Mammary epithelial cell (primary cell): ENCODE measurements at regions of chr9 and their contacts with region 1.

Region 1: DNA sequence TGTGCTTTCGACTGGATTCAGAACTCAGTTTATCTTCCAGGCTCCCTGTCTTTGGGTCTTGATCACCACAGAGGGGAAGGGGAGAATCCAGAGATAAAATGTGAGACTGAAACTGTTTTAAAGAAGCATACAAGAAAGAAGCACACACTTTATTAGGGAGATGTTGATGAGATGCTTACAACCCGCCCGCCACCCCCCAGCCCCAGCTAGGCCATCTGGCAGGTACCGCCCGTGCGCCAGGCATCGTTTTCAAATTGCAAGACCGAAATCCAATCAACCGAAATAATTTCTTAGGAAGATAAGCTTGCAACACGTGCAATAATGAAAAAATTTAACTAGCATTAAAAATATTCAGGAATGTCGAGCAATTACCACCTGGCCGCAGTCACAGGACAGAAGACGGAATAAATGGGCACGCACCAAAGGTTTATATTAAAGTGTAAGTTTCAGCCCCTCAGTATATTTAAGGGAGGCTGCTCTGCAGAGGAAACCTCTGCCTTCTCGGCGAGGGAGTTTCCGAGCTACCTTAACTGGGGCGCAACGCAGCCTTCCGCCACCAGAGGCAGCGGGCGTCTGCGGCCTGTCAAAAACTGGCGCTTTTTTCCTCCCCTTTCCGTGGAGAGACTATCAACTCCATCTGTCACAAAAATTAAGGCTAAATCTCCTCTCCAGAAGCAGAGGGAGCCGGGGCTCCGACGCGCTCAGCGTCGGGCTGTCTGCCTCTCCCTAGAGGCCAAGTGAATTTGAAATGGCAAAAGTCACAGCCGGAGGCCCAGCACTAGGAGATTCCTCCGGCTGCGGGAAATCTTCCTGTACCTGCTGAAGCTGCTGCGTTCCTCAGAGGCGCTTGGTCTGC is 996 bp upstream of the GAS1 start:
- DNase-seq: peak; percentile 77
- H3K4me3 ChIP-seq: peak overlapping the region; percentile 44 to 93 (median 85)
- H3K27ac ChIP-seq: peak overlapping the region; percentile 45
- H3K4me1 ChIP-seq: peaks cover 9% of the 10 kb centered on the region
- H3K27me3 ChIP-seq: no peaks in the 10 kb centered on the region
- CTCF ChIP-seq: peak; percentile 86 to 95

Region 2: GRCh38 chr9:86413966-86414880 is 534.1 kb before region 1 on chr9:
- CTCF ChIA-PET with region 1: no interaction called
- dilution Hi-C with region 1: no loop called
- in situ Hi-C with region 1: no loop called
- intact Hi-C with region 1: loop called (anchors 2 kb)
- DNase-seq: no peak
- H3K4me3 ChIP-seq: no peak overlapping the region
- H3K27ac ChIP-seq: no peak overlapping the region
- H3K4me1 ChIP-seq: no peaks in the 10 kb centered on the region
- H3K27me3 ChIP-seq: no peaks in the 10 kb centered on the region
- CTCF ChIP-seq: peak; percentile 59 to 61

Region 3: GRCh38 chr9:86494644-86495111 is 453.6 kb before region 1 on chr9:
- CTCF ChIA-PET with region 1: no interaction called
- dilution Hi-C with region 1: no loop called
- in situ Hi-C with region 1: loop called in 1 of 2 experiments (anchors 10 kb)
- intact Hi-C with region 1: no loop called
- DNase-seq: peak; percentile 65
- H3K4me3 ChIP-seq: no peak overlapping the region
- H3K27ac ChIP-seq: no peak overlapping the region
- H3K4me1 ChIP-seq: peaks cover 8% of the 10 kb centered on the region
- H3K27me3 ChIP-seq: no peaks in the 10 kb centered on the region
- CTCF ChIP-seq: no peak

Region 4: GRCh38 chr9:86741311-86742208 is 206.7 kb before region 1 on chr9:
- CTCF ChIA-PET with region 1: no interaction called
- dilution Hi-C with region 1: no loop called
- in situ Hi-C with region 1: no loop called
- intact Hi-C with region 1: loop called (anchors 10 kb)
- DNase-seq: peak; percentile 97
- H3K4me3 ChIP-seq: no peak overlapping the region
- H3K27ac ChIP-seq: peak overlapping the region; percentile 67
- H3K4me1 ChIP-seq: peaks cover 19% of the 10 kb centered on the region
- H3K27me3 ChIP-seq: no peaks in the 10 kb centered on the region
- CTCF ChIP-seq: no peak

Region 5: GRCh38 chr9:86965636-86966395 is 17.5 kb after region 1 on chr9:
- CTCF ChIA-PET with region 1: no interaction called
- dilution Hi-C with region 1: no loop called
- in situ Hi-C with region 1: no loop called
- intact Hi-C with region 1: no loop called
- DNase-seq: no peak
- H3K4me3 ChIP-seq: no peak overlapping the region
- H3K27ac ChIP-seq: no peak overlapping the region
- H3K4me1 ChIP-seq: peaks cover 12% of the 10 kb centered on the region
- H3K27me3 ChIP-seq: no peaks in the 10 kb centered on the region
- CTCF ChIP-seq: no peak

Region 6: GRCh38 chr9:87080512-87081264 is 132.4 kb after region 1 on chr9:
- CTCF ChIA-PET with region 1: no interaction called
- dilution Hi-C with region 1: no loop called
- in situ Hi-C with region 1: no loop called
- intact Hi-C with region 1: loop called (anchors 1 kb)
- DNase-seq: no peak
- H3K4me3 ChIP-seq: no peak overlapping the region
- H3K27ac ChIP-seq: no peak overlapping the region
- H3K4me1 ChIP-seq: peaks cover 7% of the 10 kb centered on the region
- H3K27me3 ChIP-seq: no peaks in the 10 kb centered on the region
- CTCF ChIP-seq: peak in 1 of 2 donors; percentile 34

Region 7: GRCh38 chr9:87212560-87213159 is 264.4 kb after region 1 on chr9:
- CTCF ChIA-PET with region 1: no interaction called
- dilution Hi-C with region 1: no loop called
- in situ Hi-C with region 1: no loop called
- intact Hi-C with region 1: loop called (anchors 5 kb)
- DNase-seq: peak; percentile 94
- H3K4me3 ChIP-seq: no peak overlapping the region
- H3K27ac ChIP-seq: peak overlapping the region; percentile 22
- H3K4me1 ChIP-seq: peaks cover 23% of the 10 kb centered on the region
- H3K27me3 ChIP-seq: no peaks in the 10 kb centered on the region
- CTCF ChIP-seq: no peak

Region 8: DNA sequence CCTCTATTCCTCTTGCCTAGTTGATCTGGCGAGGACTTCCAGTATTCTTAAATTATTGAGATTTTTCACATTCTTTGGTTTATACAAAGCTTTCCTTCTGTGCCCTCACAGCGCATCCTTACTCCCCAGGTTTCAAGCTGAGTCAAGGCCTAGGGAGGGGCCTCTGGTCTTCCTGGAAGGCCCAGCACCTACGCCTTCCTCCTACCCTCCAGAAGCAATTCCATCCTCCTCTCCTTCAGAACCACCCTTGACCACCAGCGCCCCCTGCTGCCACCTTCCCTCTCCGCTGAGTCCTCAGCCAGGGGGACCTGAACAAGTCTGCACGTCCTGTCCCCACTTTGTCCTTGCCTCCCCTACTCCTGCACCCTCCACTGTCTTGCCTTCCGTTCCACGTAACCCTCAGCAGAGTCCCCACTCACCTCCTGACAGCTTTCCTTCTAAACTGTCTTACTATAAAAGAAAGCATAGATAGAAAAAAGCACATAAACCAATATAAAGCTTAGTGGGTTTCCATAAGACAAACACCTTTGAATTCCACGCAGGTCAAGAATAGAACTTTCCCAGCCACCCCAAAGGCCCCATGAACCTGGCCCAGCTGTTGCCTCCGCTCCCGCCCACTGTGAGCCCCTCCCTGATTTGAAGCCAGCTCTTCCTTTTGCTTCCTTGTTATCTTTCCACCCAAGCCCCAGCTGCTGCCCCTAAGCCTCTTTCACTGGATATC is 714.7 kb after region 1 on chr9:
- CTCF ChIA-PET with region 1: no interaction called
- dilution Hi-C with region 1: no loop called
- in situ Hi-C with region 1: loop called in 1 of 2 experiments (anchors 25 kb)
- intact Hi-C with region 1: no loop called
- DNase-seq: peak; percentile 78
- H3K4me3 ChIP-seq: no peak overlapping the region
- H3K27ac ChIP-seq: no peak overlapping the region
- H3K4me1 ChIP-seq: no peaks in the 10 kb centered on the region
- H3K27me3 ChIP-seq: no peaks in the 10 kb centered on the region
- CTCF ChIP-seq: peak; percentile 84 to 92